OCI-LY7 (cell line): ENCODE measurements at regions of chr18 and their contacts with region 1.

Region 1: GRCh38 chr18:56650944-56651770 is at the start of gene WDR7:
- DNase-seq: peak; percentile 91
- H3K4me3 ChIP-seq: peak within 1 kb of the TSS; percentile 79
- H3K27ac ChIP-seq: peak within 1 kb of the TSS; percentile 62
- H3K4me1 ChIP-seq: peaks cover 10% of the 10 kb centered on the region
- CTCF ChIP-seq: no peak
- total RNA-seq, gene WDR7: 13.2 and 15.2 TPM in 2 replicates

Region 2: GRCh38 chr18:56638271-56639093 is 12.7 kb before region 1 on chr18 and contains the start of gene TXNL1:
- CTCF ChIA-PET with region 1: no interaction called
- POLR2A ChIA-PET with region 1: interaction called, 25 read pairs
- intact Hi-C with region 1: no loop called
- DNase-seq: peak; percentile 96
- H3K4me3 ChIP-seq: peak within 1 kb of the TSS; percentile 92
- H3K27ac ChIP-seq: peak within 1 kb of the TSS; percentile 88
- H3K4me1 ChIP-seq: peaks cover 17% of the 10 kb centered on the region
- CTCF ChIP-seq: no peak
- total RNA-seq, gene TXNL1: 11.7 and 13.9 TPM in 2 replicates